H1 (cell line): ENCODE measurements at regions of chr17 and their contacts with region 1.

Region 1: GRCh38 chr17:76365256-76365903 is 11.7 kb upstream of the PRPSAP1 start:
- DNase-seq: peak in 1 of 2 experiments; percentile 50
- H3K4me3 ChIP-seq: no peak overlapping the region
- H3K27ac ChIP-seq: no peak overlapping the region
- H3K4me1 ChIP-seq: peaks cover 0 to 4% (median 3%) of the 10 kb centered on the region in 4 experiments; a peak in 3 of 7 replicates
- H3K27me3 ChIP-seq: no peaks in the 10 kb centered on the region
- CTCF ChIP-seq: peak; percentile 46 to 58 (median 57)
- EP300 ChIP-seq: no peak
- POLR2A ChIP-seq: no peak
- RAD21 ChIP-seq: peak; percentile 40 to 55

Region 2: DNA sequence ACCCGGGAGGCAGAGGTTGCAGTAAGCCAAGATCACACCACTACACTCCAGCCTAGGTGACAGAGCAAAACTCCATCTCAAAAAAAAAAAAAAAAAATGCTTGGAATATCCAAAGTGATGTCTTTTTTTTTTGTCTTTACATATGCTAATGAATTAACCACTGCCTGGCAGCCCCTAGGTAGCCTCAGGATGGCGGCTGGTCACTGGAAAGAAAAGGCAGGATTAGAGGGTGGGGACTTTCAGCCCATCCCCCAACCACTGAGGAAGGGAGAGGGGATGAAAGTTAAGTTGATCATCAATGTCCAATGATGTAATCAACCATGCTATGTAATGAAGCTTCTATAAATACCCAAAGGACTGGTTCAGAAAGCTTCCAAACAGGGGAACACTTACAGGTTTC is 151.9 kb before region 1 on chr17:
- CTCF ChIA-PET with region 1: no interaction called
- POLR2A ChIA-PET with region 1: no interaction called
- DNase-seq: peak in 1 of 2 experiments; percentile 48
- H3K4me3 ChIP-seq: peak overlapping the region in 1 of 4 experiments; percentile 3; a peak in 2 of 8 replicates
- H3K27ac ChIP-seq: no peak overlapping the region
- H3K4me1 ChIP-seq: peaks cover 4 to 8% (median 6%) of the 10 kb centered on the region in 4 experiments; a peak in 5 of 7 replicates
- H3K27me3 ChIP-seq: no peaks in the 10 kb centered on the region
- CTCF ChIP-seq: no peak
- EP300 ChIP-seq: no peak
- POLR2A ChIP-seq: no peak
- RAD21 ChIP-seq: peak in 1 of 2 experiments; percentile 13; a peak in 1 of 4 replicates

Region 3: GRCh38 chr17:76255801-76256429 is 109.5 kb before region 1 on chr17:
- CTCF ChIA-PET with region 1: no interaction called
- POLR2A ChIA-PET with region 1: no interaction called
- DNase-seq: no peak
- H3K4me3 ChIP-seq: no peak overlapping the region
- H3K27ac ChIP-seq: no peak overlapping the region
- H3K4me1 ChIP-seq: no peaks in the 10 kb centered on the region
- H3K27me3 ChIP-seq: no peaks in the 10 kb centered on the region; a peak in 1 of 7 replicates
- CTCF ChIP-seq: no peak
- EP300 ChIP-seq: no peak
- POLR2A ChIP-seq: no peak
- RAD21 ChIP-seq: no peak

Region 4: GRCh38 chr17:76307299-76307965 is 57.9 kb before region 1 on chr17:
- CTCF ChIA-PET with region 1: interaction called, 10 read pairs
- POLR2A ChIA-PET with region 1: no interaction called
- DNase-seq: no peak
- H3K4me3 ChIP-seq: no peak overlapping the region
- H3K27ac ChIP-seq: no peak overlapping the region
- H3K4me1 ChIP-seq: no peaks in the 10 kb centered on the region
- H3K27me3 ChIP-seq: no peaks in the 10 kb centered on the region
- CTCF ChIP-seq: no peak
- EP300 ChIP-seq: no peak
- POLR2A ChIP-seq: no peak
- RAD21 ChIP-seq: no peak

Region 5: DNA sequence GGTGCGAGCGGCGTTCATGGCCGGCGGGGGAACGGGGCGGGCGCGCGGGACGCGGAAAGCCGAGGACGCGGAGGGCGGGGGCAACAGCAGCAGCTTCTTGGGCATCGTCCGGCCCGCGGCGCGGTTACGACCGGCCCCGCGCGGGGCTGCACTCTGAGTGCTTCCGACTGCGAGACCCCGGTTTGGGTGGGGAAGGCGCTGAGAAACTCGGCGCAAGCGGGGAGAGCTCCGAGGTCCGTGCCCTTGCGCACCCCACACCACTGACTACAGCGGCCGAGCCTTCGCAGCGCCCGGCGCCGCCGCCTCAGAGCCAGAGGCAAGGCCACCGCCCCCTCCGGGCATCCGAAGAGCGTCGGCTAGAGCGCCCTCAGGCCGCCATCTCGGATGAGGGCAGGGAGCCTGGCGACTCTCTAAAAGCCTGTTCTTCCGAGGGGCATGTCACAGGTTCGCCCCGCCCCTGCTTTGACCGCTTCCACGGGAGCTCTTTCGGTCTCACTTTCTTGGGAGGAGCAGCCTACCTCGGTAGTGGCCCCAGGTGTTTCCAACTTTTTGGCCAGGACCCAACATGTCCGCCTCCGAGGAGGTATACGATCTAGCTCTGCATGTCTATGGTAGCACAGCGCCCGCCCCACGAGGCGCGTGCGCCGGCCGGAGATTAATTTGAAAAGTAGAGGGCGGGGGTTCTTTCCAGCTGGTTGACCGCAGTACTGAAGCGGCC is 11.6 kb before region 1 on chr17 and contains the start of gene PRPSAP1:
- CTCF ChIA-PET with region 1: interaction called, 14 read pairs
- POLR2A ChIA-PET with region 1: interaction called, 15 read pairs
- DNase-seq: peak; percentile 68 to 91
- H3K4me3 ChIP-seq: peak within 1 kb of the TSS; percentile 67 to 87 (median 72)
- H3K27ac ChIP-seq: peak within 1 kb of the TSS; percentile 100
- H3K4me1 ChIP-seq: peaks cover 0 to 6% (median 0%) of the 10 kb centered on the region in 4 experiments; a peak in 3 of 7 replicates
- H3K27me3 ChIP-seq: no peaks in the 10 kb centered on the region
- CTCF ChIP-seq: peak in 1 of 3 experiments; percentile 2; a peak in 1 of 4 replicates
- EP300 ChIP-seq: no peak
- POLR2A ChIP-seq: peak; percentile 53 to 87
- RAD21 ChIP-seq: no peak
- total RNA-seq, gene PRPSAP1: 42.8 and 54.2 TPM in 2 replicates

Region 6: GRCh38 chr17:76473541-76473985 is 108.2 kb after region 1 on chr17:
- CTCF ChIA-PET with region 1: no interaction called
- POLR2A ChIA-PET with region 1: no interaction called
- DNase-seq: peak in 1 of 2 experiments; percentile 85
- H3K4me3 ChIP-seq: no peak overlapping the region
- H3K27ac ChIP-seq: no peak overlapping the region
- H3K4me1 ChIP-seq: no peaks in the 10 kb centered on the region
- H3K27me3 ChIP-seq: no peaks in the 10 kb centered on the region
- CTCF ChIP-seq: peak; percentile 71 to 83 (median 78)
- EP300 ChIP-seq: no peak
- POLR2A ChIP-seq: no peak
- RAD21 ChIP-seq: peak; percentile 48 to 68

Region 7: GRCh38 chr17:76529224-76530094 is 164.1 kb after region 1 on chr17:
- CTCF ChIA-PET with region 1: no interaction called
- POLR2A ChIA-PET with region 1: no interaction called
- DNase-seq: peak in 1 of 2 experiments; percentile 57
- H3K4me3 ChIP-seq: no peak overlapping the region
- H3K27ac ChIP-seq: no peak overlapping the region
- H3K4me1 ChIP-seq: peaks cover 0 to 29% (median 22%) of the 10 kb centered on the region in 4 experiments; a peak in 6 of 7 replicates
- H3K27me3 ChIP-seq: no peaks in the 10 kb centered on the region; a peak in 1 of 7 replicates
- CTCF ChIP-seq: no peak
- EP300 ChIP-seq: no peak
- POLR2A ChIP-seq: no peak
- RAD21 ChIP-seq: no peak